ENCODE measurements at regions of chr11 and their contacts with region 1.

Region 1: GRCh38 chr11:36541001-36541400 is 26.8 kb upstream of the RAG1 start:
- DNase-seq: peak; percentile 55
- H3K4me3 Mint-ChIP-seq: no peak overlapping the region
- H3K27ac Mint-ChIP-seq: no peak overlapping the region
- H3K4me1 Mint-ChIP-seq: no peaks in the 10 kb centered on the region
- H3K27me3 Mint-ChIP-seq: peaks cover 42% of the 10 kb centered on the region
- CTCF ChIP-seq: peak; percentile 33

Region 2: DNA sequence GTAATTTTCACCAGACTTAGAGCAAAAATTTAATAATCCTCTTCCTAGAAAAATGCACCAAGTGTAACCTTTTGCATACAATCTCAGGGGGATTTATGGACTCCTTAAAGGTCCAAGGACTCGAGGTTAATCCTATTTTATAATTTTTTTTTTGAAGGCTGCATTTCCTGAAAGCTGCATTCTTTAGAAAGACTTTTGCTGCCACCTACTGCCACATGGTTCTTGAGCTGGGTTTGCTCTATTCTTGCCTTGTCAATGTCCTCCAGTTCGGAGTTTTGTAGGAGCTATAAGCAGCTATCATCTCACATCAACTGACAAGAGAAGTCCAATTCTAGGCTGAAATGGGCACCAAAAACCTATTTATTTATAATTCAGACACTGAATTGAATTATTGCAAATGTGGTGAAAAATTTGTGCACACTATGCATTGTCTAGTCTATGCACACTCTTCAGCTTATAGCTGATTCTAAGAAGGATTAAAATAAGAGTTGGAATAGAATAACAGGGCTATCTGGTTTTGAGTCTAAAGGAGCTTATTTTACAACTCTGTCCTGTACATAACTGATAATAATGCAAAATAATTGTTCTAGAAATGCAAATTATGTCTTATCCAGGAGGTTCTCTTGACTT is 62.2 kb before region 1 on chr11:
- CTCF ChIA-PET with region 1: no interaction called
- intact Hi-C with region 1: no loop called
- DNase-seq: peak; percentile 46
- H3K4me3 Mint-ChIP-seq: no peak overlapping the region
- H3K27ac Mint-ChIP-seq: no peak overlapping the region
- H3K4me1 Mint-ChIP-seq: no peaks in the 10 kb centered on the region
- H3K27me3 Mint-ChIP-seq: no peaks in the 10 kb centered on the region
- CTCF ChIP-seq: peak; percentile 49

Region 3: GRCh38 chr11:36509694-36510566 is 31.1 kb before region 1 on chr11 and contains the start of gene TRAF6:
- CTCF ChIA-PET with region 1: interaction called, 7 read pairs
- intact Hi-C with region 1: loop called (anchors 2 kb)
- DNase-seq: peak; percentile 95
- H3K4me3 Mint-ChIP-seq: peak within 1 kb of the TSS; percentile 93
- H3K27ac Mint-ChIP-seq: peak within 1 kb of the TSS; percentile 74
- H3K4me1 Mint-ChIP-seq: peaks cover 16% of the 10 kb centered on the region
- H3K27me3 Mint-ChIP-seq: peaks cover 21% of the 10 kb centered on the region
- CTCF ChIP-seq: peak; percentile 93
- total RNA-seq, gene TRAF6: 13.5 and 14.8 TPM in 2 replicates

Measured in Calu3 (cell line).